Aorta (tissue), 5 donors: ENCODE measurements at regions of chr22 and their contacts with region 1.

Region 1: DNA sequence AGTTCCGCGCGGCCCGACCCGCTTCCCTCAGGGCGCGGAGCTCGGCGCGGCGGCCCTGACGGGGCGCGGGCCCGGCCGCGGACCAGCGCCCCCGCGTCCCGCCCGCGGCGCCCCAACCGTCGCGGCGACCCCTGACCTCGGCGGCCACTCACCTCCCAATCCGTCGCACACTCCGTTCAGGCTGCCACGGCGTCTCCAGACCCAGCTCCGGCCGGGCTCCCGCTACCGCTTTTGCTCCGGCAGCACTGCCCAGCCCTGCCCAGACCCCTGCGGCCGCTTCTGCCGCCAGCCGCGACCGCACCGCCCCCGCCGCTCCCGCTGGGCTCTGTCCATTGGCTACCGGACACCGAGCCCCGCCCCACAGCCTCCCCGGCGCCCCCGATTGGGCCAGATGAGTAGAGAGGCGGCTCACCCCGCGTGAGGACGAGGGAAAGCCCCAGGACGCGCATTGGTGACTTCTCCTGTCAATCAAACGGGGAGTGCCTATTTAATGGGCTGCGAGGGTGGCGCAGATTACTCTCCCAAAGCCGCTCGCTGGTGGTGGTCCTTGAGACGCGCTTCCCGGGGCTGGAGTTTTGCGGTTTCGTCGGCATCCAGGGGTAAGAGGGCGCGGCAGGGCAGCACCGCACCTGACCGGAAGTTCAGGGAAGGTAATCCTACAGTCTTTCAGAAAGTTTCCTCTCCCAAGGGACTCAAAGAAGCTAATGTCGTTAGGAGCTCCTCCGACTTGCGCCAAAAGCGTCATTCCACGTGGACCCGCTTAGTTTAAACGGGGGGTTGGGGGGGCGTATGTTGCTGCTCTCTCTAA is at the start of gene PACSIN2:
- DNase-seq: peak; percentile 99 to 100
- ATAC-seq: peak; percentile 100
- H3K4me3 ChIP-seq: peak within 1 kb of the TSS; percentile 64 to 94
- H3K27ac ChIP-seq: peak within 1 kb of the TSS in 1 of 2 donors; percentile 61
- H3K4me1 ChIP-seq: no peaks in the 10 kb centered on the region
- H3K27me3 ChIP-seq: no peaks in the 10 kb centered on the region
- total RNA-seq, gene PACSIN2: 59.1 to 127 TPM

Region 2: DNA sequence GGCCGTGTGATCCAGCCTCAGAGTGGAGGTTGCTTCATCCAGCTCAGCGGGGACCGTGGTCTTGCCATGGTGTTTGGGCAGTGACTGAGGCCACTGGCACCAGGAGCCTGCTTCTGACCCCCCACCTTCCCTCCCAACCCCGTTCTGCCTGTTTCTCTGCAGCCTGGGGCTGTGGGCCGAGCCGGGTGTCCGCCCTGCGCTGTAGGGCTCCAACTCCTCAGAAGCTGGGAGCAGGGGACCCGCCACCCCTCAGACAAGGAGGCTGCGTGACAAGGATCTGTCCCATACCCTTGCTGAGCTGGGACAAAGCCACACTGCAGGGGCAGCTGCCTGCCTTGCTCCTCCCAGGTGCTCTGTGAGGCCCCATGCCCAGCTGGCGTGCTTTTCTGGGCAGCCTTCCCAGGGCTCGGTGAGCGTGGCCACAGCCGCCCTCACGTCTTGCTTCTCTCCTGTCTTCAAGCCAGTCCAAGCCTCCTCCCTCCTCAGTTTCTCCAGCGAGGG is 146.3 kb before region 1 on chr22:
- intact Hi-C with region 1: loop called in 1 of 2 experiments (anchors 5 kb)
- DNase-seq: peak; percentile 86 to 88
- ATAC-seq: peak; percentile 75
- H3K4me3 ChIP-seq: no peak overlapping the region
- H3K27ac ChIP-seq: peak overlapping the region in 1 of 2 donors; percentile 60
- H3K4me1 ChIP-seq: no peaks in the 10 kb centered on the region
- H3K27me3 ChIP-seq: no peaks in the 10 kb centered on the region

Region 3: DNA sequence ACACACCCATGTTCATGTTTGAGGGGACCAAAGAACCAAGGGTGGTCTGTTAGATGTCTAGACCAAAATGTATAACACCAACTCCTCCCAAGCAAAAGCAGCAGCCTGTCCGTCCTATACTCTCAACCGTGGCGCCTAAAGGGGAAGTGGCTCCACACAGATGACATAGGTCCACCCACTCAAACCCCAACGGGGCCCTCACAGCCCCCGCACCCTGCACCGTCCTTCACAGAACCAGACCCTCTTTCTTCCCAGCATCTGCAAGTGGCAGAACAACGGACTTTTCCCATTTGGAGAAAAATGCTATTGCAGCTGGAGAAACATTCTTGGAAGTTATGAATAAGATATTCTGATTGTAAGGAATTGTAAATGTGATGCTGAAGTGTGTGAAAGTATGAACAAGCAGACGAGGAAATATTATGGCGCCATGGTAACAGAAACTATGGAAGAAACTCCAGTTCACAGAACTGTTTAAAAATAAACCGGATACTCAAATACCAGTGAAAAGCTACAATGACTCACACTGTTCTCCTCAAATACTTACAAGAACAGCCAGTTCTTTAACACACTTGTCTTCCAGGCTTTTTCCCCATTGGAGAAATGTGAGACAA is 81.5 kb before region 1 on chr22:
- intact Hi-C with region 1: loop called in 1 of 2 experiments (anchors 5 kb)
- DNase-seq: peak; percentile 68 to 80
- ATAC-seq: peak; percentile 80
- H3K4me3 ChIP-seq: no peak overlapping the region
- H3K27ac ChIP-seq: peak overlapping the region; percentile 95 to 96
- H3K4me1 ChIP-seq: peaks cover 15 to 25% of the 10 kb centered on the region in 2 donors
- H3K27me3 ChIP-seq: no peaks in the 10 kb centered on the region

Region 4: DNA sequence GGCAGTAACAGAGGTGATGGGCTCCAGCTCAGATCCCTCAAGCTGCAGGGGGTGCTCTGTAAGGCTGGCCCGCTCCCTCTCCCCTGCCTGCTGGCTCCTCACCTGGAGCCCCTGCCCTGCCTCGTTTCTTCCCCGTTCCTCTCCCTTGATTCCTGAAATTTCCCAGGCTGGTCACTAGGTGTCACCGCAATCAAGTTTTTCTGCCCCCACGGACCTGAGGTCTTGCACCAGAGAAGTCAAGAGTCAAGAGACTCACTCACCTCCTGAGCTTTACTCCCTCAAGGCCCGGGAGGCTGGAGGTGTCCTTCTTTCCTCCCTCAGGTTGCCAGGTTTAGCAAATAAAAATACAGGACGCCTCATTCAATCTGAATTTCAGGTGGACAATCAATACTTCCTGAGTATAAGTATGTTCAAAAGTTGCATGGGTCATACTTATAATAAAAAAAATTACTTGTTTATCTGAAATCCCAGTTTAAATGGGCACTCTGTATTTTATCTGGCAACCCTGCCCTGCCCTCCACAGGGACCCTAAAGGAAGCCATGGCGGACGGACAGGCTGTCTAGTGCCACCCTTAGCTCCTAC is 258.9 kb after region 1 on chr22:
- intact Hi-C with region 1: no loop called
- DNase-seq: no peak
- ATAC-seq: no peak
- H3K4me3 ChIP-seq: no peak overlapping the region
- H3K27ac ChIP-seq: no peak overlapping the region
- H3K4me1 ChIP-seq: no peaks in the 10 kb centered on the region
- H3K27me3 ChIP-seq: no peaks in the 10 kb centered on the region